ENCODE measurements at regions of chr12 and their contacts with region 1.

Region 1: GRCh38 chr12:59041241-59042121 is 121.2 kb upstream of the LRIG3 start:
- DNase-seq: peak; percentile 98
- H3K4me3 ChIP-seq: peak overlapping the region in 2 of 3 experiments; percentile 9 to 18
- H3K27ac ChIP-seq: peak overlapping the region; percentile 91
- H3K4me1 ChIP-seq: peaks cover 62% of the 10 kb centered on the region
- H3K27me3 ChIP-seq: no peaks in the 10 kb centered on the region
- CTCF ChIP-seq: no peak

Region 2: GRCh38 chr12:58888131-58888783 is 153.2 kb before region 1 on chr12:
- CTCF ChIA-PET with region 1: interaction called, 11 read pairs
- dilution Hi-C with region 1: no loop called
- in situ Hi-C with region 1: no loop called
- intact Hi-C with region 1: loop called (anchors 1 kb)
- DNase-seq: peak; percentile 89
- H3K4me3 ChIP-seq: no peak overlapping the region
- H3K27ac ChIP-seq: peak overlapping the region; percentile 73
- H3K4me1 ChIP-seq: peaks cover 24% of the 10 kb centered on the region
- H3K27me3 ChIP-seq: no peaks in the 10 kb centered on the region
- CTCF ChIP-seq: no peak

Region 3: GRCh38 chr12:58988643-58989344 is 52.7 kb before region 1 on chr12:
- CTCF ChIA-PET with region 1: no interaction called
- dilution Hi-C with region 1: no loop called
- in situ Hi-C with region 1: no loop called
- intact Hi-C with region 1: no loop called
- DNase-seq: no peak
- H3K4me3 ChIP-seq: no peak overlapping the region
- H3K27ac ChIP-seq: no peak overlapping the region
- H3K4me1 ChIP-seq: no peaks in the 10 kb centered on the region
- H3K27me3 ChIP-seq: no peaks in the 10 kb centered on the region
- CTCF ChIP-seq: no peak

Region 4: DNA sequence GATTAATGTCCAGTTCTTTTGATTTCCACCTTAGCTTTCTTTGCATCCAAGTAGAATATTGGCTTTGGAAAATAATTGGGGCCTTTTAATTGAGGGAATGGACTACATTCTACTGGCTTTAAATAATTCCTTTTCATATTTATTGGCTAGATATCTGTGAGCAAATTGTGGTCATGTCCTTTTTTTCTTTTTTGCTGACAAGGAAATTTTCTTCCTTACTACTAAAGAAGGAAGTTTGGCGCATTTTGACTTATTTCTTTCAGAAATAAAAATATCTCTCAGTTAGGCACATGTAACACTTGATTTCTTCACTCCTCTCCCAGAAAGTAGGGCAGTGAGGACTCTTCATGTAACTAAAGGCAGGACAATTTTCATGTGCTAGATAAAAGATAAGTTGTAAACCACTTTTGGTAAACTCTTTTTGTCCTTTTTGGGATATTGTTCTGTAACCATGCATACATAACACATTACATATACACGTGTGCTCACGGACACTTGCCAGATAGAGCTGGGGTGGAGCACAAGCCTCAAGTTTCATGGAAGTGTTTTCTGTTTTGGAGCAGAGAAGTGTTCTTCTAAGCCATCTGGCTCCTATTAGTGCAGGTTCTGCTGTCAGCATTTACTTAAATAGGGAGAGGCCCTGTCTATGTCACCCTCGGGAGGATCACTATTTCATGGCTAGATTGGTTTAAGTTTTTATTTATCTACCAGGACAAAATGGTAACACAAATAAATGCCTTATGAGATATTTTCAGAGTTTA is 36.1 kb before region 1 on chr12:
- CTCF ChIA-PET with region 1: no interaction called
- dilution Hi-C with region 1: no loop called
- in situ Hi-C with region 1: no loop called
- intact Hi-C with region 1: no loop called
- DNase-seq: no peak
- H3K4me3 ChIP-seq: no peak overlapping the region
- H3K27ac ChIP-seq: no peak overlapping the region
- H3K4me1 ChIP-seq: no peaks in the 10 kb centered on the region
- H3K27me3 ChIP-seq: no peaks in the 10 kb centered on the region
- CTCF ChIP-seq: no peak

Region 5: DNA sequence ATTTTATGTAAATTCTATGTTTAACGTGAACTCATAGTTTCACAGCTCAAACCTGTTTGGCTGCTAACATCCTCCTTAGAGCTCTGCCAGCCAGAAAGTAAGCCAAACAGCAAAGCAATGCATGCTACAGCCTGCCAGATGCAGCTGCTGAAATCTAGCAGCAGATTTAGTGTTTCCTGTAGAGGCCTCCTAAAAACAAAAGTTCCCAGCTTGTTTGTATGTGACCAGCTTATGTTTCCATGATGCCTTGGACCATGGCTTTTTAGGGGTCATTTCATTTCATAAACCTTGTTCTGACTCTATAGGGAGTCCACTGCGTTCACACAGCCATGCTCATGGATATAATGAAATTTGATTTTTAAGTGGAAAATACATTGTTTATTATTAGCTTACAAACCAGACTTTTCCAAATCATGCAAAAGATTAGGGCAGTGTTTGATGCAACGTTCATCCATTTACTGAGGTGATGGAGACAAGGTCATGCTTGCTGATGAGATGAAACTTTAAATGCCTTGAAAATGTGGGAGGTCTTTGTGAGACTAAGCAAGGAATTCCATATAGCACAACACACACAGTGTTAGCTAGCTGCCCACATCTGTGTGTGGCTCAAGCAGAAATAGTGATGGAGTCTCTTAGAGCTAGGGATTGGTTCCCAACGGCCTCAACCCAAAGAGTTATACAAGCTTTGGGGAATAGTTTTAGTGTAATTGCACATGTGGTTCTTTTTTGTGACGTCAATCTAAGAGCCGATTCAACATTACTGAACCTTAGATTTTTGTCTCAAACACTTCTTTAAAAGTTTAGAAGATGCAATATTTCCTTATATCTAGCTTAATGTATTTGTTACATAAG is 36.3 kb after region 1 on chr12:
- CTCF ChIA-PET with region 1: no interaction called
- dilution Hi-C with region 1: no loop called
- in situ Hi-C with region 1: no loop called
- intact Hi-C with region 1: loop called (anchors 1 kb)
- DNase-seq: peak; percentile 89
- H3K4me3 ChIP-seq: no peak overlapping the region
- H3K27ac ChIP-seq: peak overlapping the region; percentile 95
- H3K4me1 ChIP-seq: peaks cover 41% of the 10 kb centered on the region
- H3K27me3 ChIP-seq: no peaks in the 10 kb centered on the region
- CTCF ChIP-seq: no peak